Panc1 (cell line): ENCODE measurements at regions of chr6 and their contacts with region 1.

Region 1: GRCh38 chr6:3162565-3163247 is 5.4 kb upstream of the TUBB2A start:
- DNase-seq: no peak
- ATAC-seq: peak; percentile 87
- H3K4me3 ChIP-seq: peak overlapping the region; percentile 76 to 84
- H3K27ac ChIP-seq: peak overlapping the region; percentile 92
- H3K4me1 ChIP-seq: peaks cover 28% of the 10 kb centered on the region
- H3K27me3 ChIP-seq: no peaks in the 10 kb centered on the region
- CTCF ChIP-seq: no peak; the same call in 1 of the 2 replicates

Region 2: GRCh38 chr6:3139090-3139903 is 23.4 kb before region 1 on chr6:
- CTCF ChIA-PET with region 1: no interaction called
- POLR2A ChIA-PET with region 1: interaction called, 18 read pairs
- in situ Hi-C with region 1: no loop called
- intact Hi-C with region 1: no loop called
- DNase-seq: no peak
- ATAC-seq: peak; percentile 42; the same call in 1 of the 2 replicates
- H3K4me3 ChIP-seq: no peak overlapping the region
- H3K27ac ChIP-seq: no peak overlapping the region
- H3K4me1 ChIP-seq: no peaks in the 10 kb centered on the region
- H3K27me3 ChIP-seq: no peaks in the 10 kb centered on the region
- CTCF ChIP-seq: no peak

Region 3: GRCh38 chr6:3231247-3232016 is 68.7 kb after region 1 on chr6:
- CTCF ChIA-PET with region 1: no interaction called
- POLR2A ChIA-PET with region 1: no interaction called
- in situ Hi-C with region 1: no loop called
- intact Hi-C with region 1: loop called (anchors 10 kb)
- DNase-seq: no peak
- ATAC-seq: peak; percentile 72
- H3K4me3 ChIP-seq: peak overlapping the region; percentile 61 to 78
- H3K27ac ChIP-seq: peak overlapping the region; percentile 61
- H3K4me1 ChIP-seq: peaks cover 9% of the 10 kb centered on the region
- H3K27me3 ChIP-seq: peaks cover 6% of the 10 kb centered on the region
- CTCF ChIP-seq: no peak

Region 4: DNA sequence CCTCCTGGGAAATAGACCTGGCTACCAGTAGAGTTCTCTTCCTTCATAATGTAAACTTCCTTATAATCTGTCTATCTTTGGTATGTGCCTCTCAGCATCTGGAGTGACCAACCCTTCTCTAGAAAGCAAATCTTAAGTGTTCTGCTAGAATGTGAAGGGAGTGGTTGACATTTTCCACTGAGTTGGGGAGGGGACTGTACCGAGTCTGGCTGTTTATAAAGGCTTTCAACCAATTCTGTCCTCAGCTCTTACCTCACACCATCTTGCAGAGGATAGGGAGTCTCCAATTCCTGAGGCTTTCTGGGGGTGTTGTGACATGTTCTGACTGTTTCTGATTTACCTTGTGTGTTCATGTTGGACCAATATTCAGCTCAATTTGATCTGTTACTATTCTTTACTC is 876.6 kb after region 1 on chr6:
- CTCF ChIA-PET with region 1: no interaction called
- POLR2A ChIA-PET with region 1: no interaction called
- in situ Hi-C with region 1: no loop called
- intact Hi-C with region 1: no loop called
- DNase-seq: no peak
- ATAC-seq: no peak
- H3K4me3 ChIP-seq: no peak overlapping the region
- H3K27ac ChIP-seq: no peak overlapping the region
- H3K4me1 ChIP-seq: no peaks in the 10 kb centered on the region; the same call in 1 of the 2 replicates
- H3K27me3 ChIP-seq: no peaks in the 10 kb centered on the region
- CTCF ChIP-seq: no peak

Region 5: DNA sequence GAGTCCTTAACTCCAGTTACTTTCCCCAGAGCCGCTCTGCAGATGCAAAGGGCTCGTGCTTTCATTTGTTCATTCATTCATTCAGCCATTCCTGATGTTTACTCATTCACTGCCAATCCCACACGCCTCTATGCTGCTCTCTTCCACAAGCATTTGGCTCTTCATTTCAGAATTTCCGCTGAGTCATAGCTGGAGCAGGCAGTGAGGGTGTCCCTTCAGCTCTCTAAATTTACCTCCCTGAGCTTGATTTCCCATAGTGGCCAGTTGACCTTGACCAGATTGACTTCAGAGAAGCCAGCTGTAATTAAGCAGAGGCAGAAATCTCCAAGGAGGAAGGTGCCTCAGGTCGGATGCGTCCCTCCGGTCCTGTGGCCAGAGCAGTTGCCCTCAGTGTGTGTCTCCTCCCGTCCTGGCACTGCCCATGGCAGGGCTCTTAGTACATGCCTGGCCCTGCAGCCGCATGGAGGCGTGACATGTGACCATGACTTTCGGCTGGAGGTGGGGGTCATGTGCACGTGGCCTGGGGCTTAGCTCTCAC is 1239.8 kb after region 1 on chr6:
- CTCF ChIA-PET with region 1: no interaction called
- POLR2A ChIA-PET with region 1: no interaction called
- in situ Hi-C with region 1: no loop called
- intact Hi-C with region 1: no loop called
- DNase-seq: peak; percentile 42
- ATAC-seq: peak; percentile 60; the same call in 1 of the 2 replicates
- H3K4me3 ChIP-seq: no peak overlapping the region
- H3K27ac ChIP-seq: no peak overlapping the region
- H3K4me1 ChIP-seq: peaks cover 4% of the 10 kb centered on the region; the same call in 1 of the 2 replicates
- H3K27me3 ChIP-seq: no peaks in the 10 kb centered on the region
- CTCF ChIP-seq: no peak